ENCODE measurements at regions of chr6 and their contacts with region 1.

Region 1: GRCh38 chr6:105077596-105078385 is 102.0 kb downstream of the POPDC3 start:
- H3K4me3 Mint-ChIP-seq: no peak overlapping the region
- H3K27ac Mint-ChIP-seq: no peak overlapping the region
- H3K4me1 Mint-ChIP-seq: no peaks in the 10 kb centered on the region
- H3K27me3 Mint-ChIP-seq: no peaks in the 10 kb centered on the region

Region 2: DNA sequence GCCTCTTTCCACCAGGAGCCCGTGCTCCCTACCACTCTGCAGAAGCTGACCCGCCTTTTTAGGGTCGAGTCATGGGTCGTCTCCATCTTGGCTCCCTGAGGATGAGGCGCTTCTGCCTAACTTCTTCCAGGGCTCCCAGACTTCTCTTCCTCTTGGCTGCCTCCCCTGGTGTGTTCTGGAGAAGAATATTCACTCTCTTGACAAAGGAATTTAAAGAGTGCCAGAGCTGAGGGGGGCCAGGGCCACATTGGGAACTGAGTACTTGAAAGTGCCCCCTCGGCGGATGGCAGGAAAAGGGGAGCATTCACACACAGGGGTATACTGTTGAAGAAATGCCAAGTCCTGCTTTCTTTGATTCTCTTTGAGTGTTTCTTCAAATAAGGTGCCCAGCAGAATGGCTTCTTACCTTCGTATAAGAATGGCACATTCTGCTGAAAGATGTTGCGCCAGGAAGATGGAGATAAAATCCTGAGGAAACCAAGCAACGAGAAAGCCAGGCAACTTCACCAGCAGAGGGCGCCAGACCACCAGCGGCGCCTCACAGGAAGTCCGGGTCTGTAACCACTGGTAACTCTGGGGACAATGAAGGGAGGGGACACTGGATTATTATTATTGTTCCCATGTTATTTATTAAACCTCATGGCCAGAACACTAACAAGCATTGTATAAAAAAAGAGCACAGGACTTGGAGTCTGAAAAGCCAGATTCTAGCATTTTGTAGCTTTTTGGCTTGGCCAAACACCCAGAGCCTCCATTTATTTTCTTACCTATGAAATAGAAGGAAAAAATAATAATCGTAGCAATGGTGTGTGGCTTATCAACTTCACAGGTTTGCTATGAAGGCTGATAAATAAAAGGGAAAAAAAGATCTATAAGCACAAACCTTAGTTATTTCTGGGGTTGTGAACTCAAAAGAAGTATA is 394.8 kb before region 1 on chr6:
- intact Hi-C with region 1: no loop called
- H3K4me3 Mint-ChIP-seq: no peak overlapping the region
- H3K27ac Mint-ChIP-seq: no peak overlapping the region
- H3K4me1 Mint-ChIP-seq: no peaks in the 10 kb centered on the region
- H3K27me3 Mint-ChIP-seq: no peaks in the 10 kb centered on the region

Region 3: GRCh38 chr6:104789770-104790190 is 288.0 kb before region 1 on chr6:
- intact Hi-C with region 1: loop called (anchors 5 kb)
- H3K4me3 Mint-ChIP-seq: no peak overlapping the region
- H3K27ac Mint-ChIP-seq: no peak overlapping the region
- H3K4me1 Mint-ChIP-seq: peaks cover 4% of the 10 kb centered on the region
- H3K27me3 Mint-ChIP-seq: no peaks in the 10 kb centered on the region

Region 4: GRCh38 chr6:104940881-104941728 is 136.7 kb before region 1 on chr6:
- intact Hi-C with region 1: loop called (anchors 5 kb)
- H3K4me3 Mint-ChIP-seq: peak overlapping the region; percentile 69
- H3K27ac Mint-ChIP-seq: no peak overlapping the region
- H3K4me1 Mint-ChIP-seq: peaks cover 12% of the 10 kb centered on the region
- H3K27me3 Mint-ChIP-seq: peaks cover 41% of the 10 kb centered on the region